Activated CD4-positive, alpha-beta T cell treated with anti-CD3 and anti-CD28 coated beads for 36 hours (primary cell): ENCODE measurements at regions of chr12 and their contacts with region 1.

Region 1: GRCh38 chr12:12499909-12500604 is 62.6 kb downstream of the DUSP16 start:
- DNase-seq: no peak
- ATAC-seq: no peak
- H3K4me3 Mint-ChIP-seq: no peak overlapping the region
- H3K27ac Mint-ChIP-seq: peak overlapping the region; percentile 44
- H3K4me1 Mint-ChIP-seq: peaks cover 57% of the 10 kb centered on the region
- H3K27me3 Mint-ChIP-seq: no peaks in the 10 kb centered on the region

Region 2: DNA sequence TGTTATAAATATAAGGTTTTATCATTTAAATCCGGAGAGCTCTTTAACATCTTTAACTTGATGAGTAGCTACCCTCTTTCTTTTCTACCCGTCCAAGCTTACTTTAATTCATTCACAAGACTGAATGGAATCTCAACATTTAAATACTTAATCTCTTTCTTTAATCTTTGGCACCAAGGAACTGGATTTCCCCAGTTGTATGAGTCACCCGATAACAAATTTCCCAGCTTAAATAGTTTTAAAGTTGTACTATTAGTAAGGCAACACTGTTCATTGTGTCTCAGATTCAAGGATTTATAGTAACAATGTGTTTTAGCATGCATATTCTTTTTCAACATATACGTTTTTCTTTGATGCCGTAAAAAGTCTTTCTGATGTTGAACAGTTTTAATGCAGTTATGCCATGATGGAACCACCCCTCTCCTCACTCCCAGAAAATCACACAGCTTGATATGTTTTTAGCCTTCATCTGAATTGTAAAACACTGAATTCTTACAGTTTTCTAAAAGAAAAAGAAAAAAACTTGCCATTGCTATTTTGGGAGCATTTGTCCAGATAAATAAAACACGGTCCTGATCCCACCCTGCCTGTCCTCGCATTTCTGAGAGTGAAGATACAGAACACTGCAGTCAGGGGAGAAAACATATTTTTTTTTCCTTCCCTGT is 217.2 kb before region 1 on chr12:
- CTCF ChIA-PET with region 1: no interaction called
- POLR2A ChIA-PET with region 1: no interaction called
- intact Hi-C with region 1: no loop called
- DNase-seq: no peak
- ATAC-seq: no peak
- H3K4me3 Mint-ChIP-seq: no peak overlapping the region
- H3K27ac Mint-ChIP-seq: no peak overlapping the region
- H3K4me1 Mint-ChIP-seq: peaks cover 8% of the 10 kb centered on the region
- H3K27me3 Mint-ChIP-seq: peaks cover 2% of the 10 kb centered on the region

Region 3: GRCh38 chr12:12486661-12487240 is 13.3 kb before region 1 on chr12:
- CTCF ChIA-PET with region 1: interaction called, 7 read pairs
- POLR2A ChIA-PET with region 1: interaction called, 8 read pairs
- intact Hi-C with region 1: loop called (anchors 2 kb)
- DNase-seq: no peak
- ATAC-seq: peak; percentile 32
- H3K4me3 Mint-ChIP-seq: no peak overlapping the region
- H3K27ac Mint-ChIP-seq: peak overlapping the region; percentile 80
- H3K4me1 Mint-ChIP-seq: peaks cover 57% of the 10 kb centered on the region
- H3K27me3 Mint-ChIP-seq: no peaks in the 10 kb centered on the region